ENCODE measurements at regions of chr2 and their contacts with region 1.

Region 1: GRCh38 chr2:235534678-235535422 is 41.0 kb downstream of the AGAP1 start:
- DNase-seq: no peak
- ATAC-seq: no peak

Region 2: DNA sequence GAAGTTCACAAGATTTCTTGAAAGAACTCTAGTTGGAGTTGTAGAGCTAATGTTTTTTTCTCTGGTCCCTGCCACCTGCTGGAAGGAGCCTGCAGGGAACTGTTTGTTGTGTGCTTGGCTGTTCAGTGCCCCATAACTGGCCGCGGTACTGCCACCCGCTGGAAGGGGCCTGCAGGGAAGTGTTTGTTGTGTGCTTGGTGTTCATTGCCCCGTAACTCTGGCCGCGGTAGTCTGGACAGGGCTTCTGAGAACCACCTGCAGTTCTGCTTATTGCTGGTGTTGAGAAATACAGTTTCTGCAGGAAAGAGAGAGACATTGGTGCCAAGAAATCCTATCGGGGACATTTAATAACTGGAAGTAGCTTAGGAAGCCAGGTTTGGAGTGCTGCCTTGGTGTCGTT is 17.1 kb after region 1 on chr2:
- intact Hi-C with region 1: loop called (anchors 2 kb)
- DNase-seq: no peak
- ATAC-seq: peak; percentile 53

Region 3: GRCh38 chr2:235605312-235606003 is 70.6 kb after region 1 on chr2:
- intact Hi-C with region 1: no loop called
- DNase-seq: peak; percentile 86
- ATAC-seq: peak; percentile 95